ENCODE measurements at regions of chr1 and their contacts with region 1.

Region 1: GRCh38 chr1:3491291-3492246 is 37.1 kb downstream of the ARHGEF16 start:
- DNase-seq: peak; percentile 77 to 90 (median 86)
- H3K4me3 ChIP-seq: no peak overlapping the region
- H3K27ac ChIP-seq: no peak overlapping the region
- H3K4me1 ChIP-seq: no peaks in the 10 kb centered on the region
- H3K27me3 ChIP-seq: no peaks in the 10 kb centered on the region
- CTCF ChIP-seq: peak; percentile 86 to 100 (median 95)
- EP300 ChIP-seq: no peak
- POLR2A ChIP-seq: no peak

Region 2: DNA sequence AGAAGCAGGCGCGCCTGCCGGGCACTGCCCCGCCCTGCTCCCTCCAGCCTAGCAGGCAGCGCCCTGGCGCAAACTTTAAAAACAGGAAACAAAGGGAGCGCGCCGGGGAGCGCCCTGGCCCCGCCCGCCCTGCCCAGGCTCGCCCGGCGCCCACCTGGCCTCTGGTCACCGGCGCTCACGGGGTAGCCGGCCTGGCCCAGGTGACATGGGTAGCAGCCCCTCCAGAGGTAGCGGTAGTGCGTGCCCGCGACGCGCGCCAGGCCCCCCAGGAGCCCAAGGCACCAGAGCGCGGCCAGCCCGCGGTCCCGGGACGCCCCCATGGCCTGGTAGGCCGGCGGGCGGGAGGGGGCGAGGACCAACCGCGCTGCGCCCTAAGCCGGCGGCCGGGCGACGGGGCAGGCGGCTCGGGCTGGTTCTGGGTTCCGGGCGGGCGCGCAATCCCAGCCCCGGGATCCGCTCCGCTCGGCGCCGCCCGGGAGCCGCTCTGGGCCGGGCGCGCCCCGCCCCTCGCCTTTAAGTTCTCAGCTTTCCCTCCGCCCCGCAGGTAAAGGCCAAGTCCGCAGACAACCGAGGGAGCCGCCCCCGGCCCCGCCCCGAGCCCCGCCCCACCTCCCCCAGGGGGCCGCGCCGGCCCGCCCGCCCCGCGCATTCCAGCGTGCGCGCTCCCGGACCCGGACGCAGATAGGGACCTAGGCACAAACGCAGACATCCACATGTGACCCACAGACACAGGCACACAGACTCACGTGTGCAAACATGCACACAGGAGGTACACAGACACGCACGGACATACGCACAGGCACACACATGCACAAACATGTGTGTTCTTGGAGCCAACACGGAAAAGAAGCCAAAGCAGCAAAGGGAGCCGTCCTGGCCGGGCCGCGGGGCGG is 39.6 kb after region 1 on chr1:
- intact Hi-C with region 1: no loop called
- DNase-seq: peak; percentile 68 to 86 (median 74)
- H3K4me3 ChIP-seq: peak overlapping the region; percentile 60
- H3K27ac ChIP-seq: peak overlapping the region; percentile 4 to 32
- H3K4me1 ChIP-seq: peaks cover 6% of the 10 kb centered on the region
- H3K27me3 ChIP-seq: no peaks in the 10 kb centered on the region
- CTCF ChIP-seq: no peak
- EP300 ChIP-seq: no peak
- POLR2A ChIP-seq: peak; percentile 22

Region 3: DNA sequence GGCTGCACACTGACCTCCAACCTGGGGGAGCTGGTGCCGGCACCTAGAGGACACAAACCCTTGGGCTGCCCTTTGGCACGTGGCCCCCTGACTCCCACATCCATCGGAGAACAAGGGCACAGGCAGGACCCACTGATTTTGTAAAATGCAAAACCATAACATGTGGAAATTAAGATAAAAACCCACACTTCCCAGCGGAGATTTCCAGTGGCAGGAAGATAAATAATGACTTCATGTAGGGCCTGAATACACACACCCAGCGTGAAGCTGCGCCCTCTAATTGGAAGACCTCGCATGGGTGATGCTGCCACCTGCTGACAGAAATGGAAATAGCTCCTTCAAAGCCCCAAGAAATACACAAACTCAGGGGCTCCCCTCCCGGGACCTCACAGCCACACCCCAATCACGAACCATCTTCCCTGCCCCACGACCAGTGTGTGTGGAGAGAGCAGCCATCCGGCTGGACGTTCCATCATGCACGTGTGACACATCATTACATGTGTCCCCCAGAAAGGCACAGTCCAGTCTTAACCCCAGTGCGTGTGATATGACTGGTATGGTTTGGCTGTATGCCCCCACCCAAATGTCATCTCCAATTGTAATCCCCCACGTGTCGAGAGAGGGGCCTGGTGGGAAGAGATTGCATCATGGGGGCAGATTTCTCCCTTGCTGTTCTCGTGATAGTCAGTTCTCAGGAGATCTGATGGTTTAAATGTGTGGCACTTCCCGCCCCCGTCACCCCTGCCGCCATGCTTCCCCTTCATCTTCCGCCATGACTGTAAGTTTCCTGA is 127.5 kb after region 1 on chr1:
- intact Hi-C with region 1: loop called (anchors 2 kb)
- DNase-seq: peak; percentile 61 to 80 (median 75)
- H3K4me3 ChIP-seq: no peak overlapping the region
- H3K27ac ChIP-seq: no peak overlapping the region
- H3K4me1 ChIP-seq: peaks cover 8% of the 10 kb centered on the region
- H3K27me3 ChIP-seq: no peaks in the 10 kb centered on the region
- CTCF ChIP-seq: peak; percentile 72 to 85 (median 77)
- EP300 ChIP-seq: no peak
- POLR2A ChIP-seq: no peak

Region 4: GRCh38 chr1:3624200-3625136 is 132.9 kb after region 1 on chr1 and contains the start of gene TPRG1L:
- intact Hi-C with region 1: loop called (anchors 2 kb)
- DNase-seq: peak; percentile 97 to 99 (median 99)
- H3K4me3 ChIP-seq: peak within 1 kb of the TSS; percentile 94
- H3K27ac ChIP-seq: peak within 1 kb of the TSS; percentile 43 to 60
- H3K4me1 ChIP-seq: peaks cover 9% of the 10 kb centered on the region
- H3K27me3 ChIP-seq: no peaks in the 10 kb centered on the region
- CTCF ChIP-seq: no peak
- EP300 ChIP-seq: no peak
- POLR2A ChIP-seq: peak; percentile 10
- total RNA-seq, gene TPRG1L: 25.3 to 51.1 (median 44.2) TPM

Region 5: GRCh38 chr1:3717715-3718601 is 226.4 kb after region 1 on chr1:
- intact Hi-C with region 1: loop called in 2 of 4 experiments (anchors 5 to 10 kb)
- DNase-seq: no peak
- H3K4me3 ChIP-seq: no peak overlapping the region
- H3K27ac ChIP-seq: no peak overlapping the region
- H3K4me1 ChIP-seq: peaks cover 2% of the 10 kb centered on the region
- H3K27me3 ChIP-seq: no peaks in the 10 kb centered on the region
- CTCF ChIP-seq: no peak
- EP300 ChIP-seq: no peak
- POLR2A ChIP-seq: no peak

Region 6: DNA sequence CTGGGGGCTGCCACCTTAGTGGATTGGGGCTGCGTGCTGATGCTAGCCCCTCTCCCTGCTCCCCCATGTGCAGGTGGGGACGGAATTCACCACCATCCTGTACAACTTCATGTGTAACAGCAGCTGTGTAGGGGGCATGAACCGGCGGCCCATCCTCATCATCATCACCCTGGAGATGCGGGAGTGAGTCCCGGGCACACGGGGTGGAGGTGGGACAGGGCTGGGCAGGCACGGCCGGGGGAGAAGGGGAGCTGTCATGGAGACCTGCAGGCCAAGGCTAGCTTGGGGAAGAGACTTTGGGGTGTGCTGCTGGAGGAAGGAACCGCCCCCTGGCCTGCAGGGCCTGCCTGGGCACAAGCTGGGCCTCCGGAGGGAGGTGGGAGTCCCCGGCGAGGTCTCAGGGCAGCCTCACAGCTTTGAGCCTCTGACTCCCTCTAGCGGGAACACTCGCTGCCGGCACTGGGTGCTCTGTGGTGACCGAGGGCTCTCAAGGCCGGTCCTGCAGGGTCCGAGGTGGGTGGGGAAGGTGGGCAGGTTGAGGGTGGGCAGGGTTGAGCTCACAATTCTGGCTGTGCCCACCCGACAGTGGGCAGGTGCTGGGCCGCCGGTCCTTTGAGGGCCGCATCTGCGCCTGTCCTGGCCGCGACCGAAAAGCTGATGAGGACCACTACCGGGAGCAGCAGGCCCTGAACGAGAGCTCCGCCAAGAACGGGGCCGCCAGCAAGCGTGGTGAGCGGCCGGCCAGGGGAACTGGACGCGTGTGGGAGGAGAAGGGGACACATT is 235.7 kb after region 1 on chr1:
- intact Hi-C with region 1: loop called in 2 of 4 experiments (anchors 5 to 10 kb)
- DNase-seq: no peak
- H3K4me3 ChIP-seq: no peak overlapping the region
- H3K27ac ChIP-seq: no peak overlapping the region
- H3K4me1 ChIP-seq: peaks cover 2% of the 10 kb centered on the region
- H3K27me3 ChIP-seq: no peaks in the 10 kb centered on the region
- CTCF ChIP-seq: no peak
- EP300 ChIP-seq: no peak
- POLR2A ChIP-seq: no peak